AG04450 (cell line): ENCODE measurements at regions of chr14 and their contacts with region 1.

Region 1: DNA sequence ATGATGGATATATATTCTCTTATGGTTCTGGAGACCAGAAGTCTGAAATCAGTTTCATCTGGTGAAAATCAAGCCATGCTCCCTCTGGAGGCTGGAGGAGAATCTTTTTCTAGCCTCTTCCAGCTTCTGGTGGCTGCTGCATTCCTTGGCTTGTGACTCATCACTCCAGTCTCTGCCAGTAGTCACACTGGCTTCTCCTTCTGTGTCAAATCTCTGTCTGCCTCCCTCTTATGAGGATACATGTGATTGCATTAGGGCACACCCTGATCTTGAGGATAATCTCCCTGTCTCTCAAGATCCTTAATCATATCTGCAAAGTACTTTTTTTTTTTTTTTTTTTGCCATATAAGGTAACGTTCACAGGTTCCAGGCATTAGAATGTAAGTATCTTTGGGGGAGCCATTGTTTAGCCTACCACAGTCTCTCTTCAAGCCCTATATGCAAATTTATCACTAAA is 17.7 kb downstream of the DNAL1 start:
- DNase-seq: peak; percentile 61
- H3K4me3 ChIP-seq: no peak overlapping the region
- H3K27ac ChIP-seq: no peak overlapping the region
- H3K27me3 ChIP-seq: no peaks in the 10 kb centered on the region
- CTCF ChIP-seq: peak; percentile 71

Region 2: DNA sequence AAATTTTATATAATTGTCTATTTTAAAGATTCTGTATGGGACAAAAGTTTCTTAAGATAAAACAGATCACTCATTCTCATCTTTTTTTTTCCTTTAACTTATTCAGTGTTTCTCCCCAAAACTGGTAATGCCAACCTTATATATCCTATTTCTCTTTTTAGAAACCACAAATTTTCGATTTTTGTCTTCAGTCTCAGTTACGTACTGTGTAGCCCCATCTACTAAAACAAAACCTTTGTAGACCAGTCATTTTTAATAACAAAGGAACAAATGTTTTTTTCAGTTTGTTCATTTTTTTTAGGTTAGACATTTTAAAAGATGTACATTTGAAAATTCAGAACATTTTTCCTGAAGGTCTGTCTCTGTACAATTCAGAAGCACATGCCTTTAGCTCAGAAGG is 33.5 kb after region 1 on chr14:
- CTCF ChIA-PET with region 1: interaction called, 12 read pairs
- POLR2A ChIA-PET with region 1: no interaction called
- DNase-seq: no peak
- H3K4me3 ChIP-seq: no peak overlapping the region
- H3K27ac ChIP-seq: no peak overlapping the region
- H3K27me3 ChIP-seq: no peaks in the 10 kb centered on the region
- CTCF ChIP-seq: no peak